Activated CD4-positive, alpha-beta T cell treated with anti-CD3 and anti-CD28 coated beads for 36 hours (primary cell): ENCODE measurements at regions of chr13 and their contacts with region 1.

Region 1: GRCh38 chr13:107650081-107650701 is 565.1 kb downstream of the LIG4 start:
- DNase-seq: peak; percentile 60
- ATAC-seq: no peak
- H3K4me3 Mint-ChIP-seq: no peak overlapping the region
- H3K27ac Mint-ChIP-seq: no peak overlapping the region
- H3K4me1 Mint-ChIP-seq: no peaks in the 10 kb centered on the region
- H3K27me3 Mint-ChIP-seq: no peaks in the 10 kb centered on the region

Region 2: GRCh38 chr13:107211073-107211472 is 439.1 kb before region 1 on chr13:
- CTCF ChIA-PET with region 1: interaction called, 15 read pairs
- POLR2A ChIA-PET with region 1: no interaction called
- intact Hi-C with region 1: loop called (anchors 1 kb)
- DNase-seq: peak; percentile 74
- ATAC-seq: peak; percentile 77
- H3K4me3 Mint-ChIP-seq: no peak overlapping the region
- H3K27ac Mint-ChIP-seq: no peak overlapping the region
- H3K4me1 Mint-ChIP-seq: no peaks in the 10 kb centered on the region
- H3K27me3 Mint-ChIP-seq: peaks cover 4% of the 10 kb centered on the region

Region 3: DNA sequence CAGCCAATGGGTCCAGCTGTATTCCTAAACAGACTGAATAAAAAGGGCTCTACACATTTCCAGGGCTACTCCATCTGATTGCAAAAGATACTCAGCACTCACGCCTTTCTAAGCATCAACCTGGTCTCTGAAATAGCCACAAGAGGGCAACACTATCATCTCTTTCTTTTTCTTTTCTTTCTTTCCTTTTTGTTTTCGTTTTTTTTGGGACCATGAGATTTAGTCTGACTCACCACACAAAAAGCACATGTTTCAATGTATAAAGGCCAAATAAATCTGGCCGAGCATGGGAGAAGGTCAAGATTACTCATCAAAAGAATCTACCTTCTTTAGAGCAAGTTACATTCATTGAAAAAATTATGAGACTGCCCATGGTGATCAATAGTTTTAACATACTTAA is 276.6 kb before region 1 on chr13:
- CTCF ChIA-PET with region 1: interaction called, 3 read pairs
- POLR2A ChIA-PET with region 1: no interaction called
- intact Hi-C with region 1: loop called in 1 of 2 experiments (anchors 5 kb)
- DNase-seq: no peak
- ATAC-seq: no peak
- H3K4me3 Mint-ChIP-seq: no peak overlapping the region
- H3K27ac Mint-ChIP-seq: no peak overlapping the region
- H3K4me1 Mint-ChIP-seq: no peaks in the 10 kb centered on the region
- H3K27me3 Mint-ChIP-seq: no peaks in the 10 kb centered on the region